ENCODE measurements at regions of chr17 and their contacts with region 1.

Region 1: DNA sequence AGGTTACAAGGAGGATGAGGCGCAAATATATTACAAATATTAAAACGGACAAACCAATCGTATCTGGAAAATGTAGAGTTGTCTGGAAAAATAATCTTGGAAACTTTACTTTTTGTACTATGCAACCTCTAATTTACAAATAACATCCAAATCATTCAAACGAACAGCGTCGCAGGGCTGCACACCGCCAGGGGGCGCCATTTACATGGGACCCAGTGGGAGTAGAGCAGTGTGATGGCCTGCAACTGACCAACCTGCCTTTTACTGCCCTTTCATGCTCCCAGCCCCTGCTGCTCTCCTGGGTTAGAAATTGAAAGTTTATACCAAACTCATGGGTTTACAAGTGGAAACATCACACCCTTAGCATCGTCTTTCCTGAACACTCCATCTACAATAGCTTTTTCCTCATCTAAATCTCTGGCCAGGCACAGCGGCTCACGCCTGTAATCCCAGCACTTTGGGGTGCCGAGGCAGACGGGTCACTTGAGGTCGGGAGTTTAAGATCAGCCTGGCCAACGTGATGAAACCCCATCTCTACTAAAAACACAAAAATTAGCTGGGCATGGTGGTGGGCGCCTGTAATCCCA is 10.0 kb downstream of the PITPNC1 start:
- DNase-seq: peak; percentile 55
- ATAC-seq: peak; percentile 28; the same call in 1 of the 2 replicates
- H3K4me3 ChIP-seq: no peak overlapping the region
- H3K27ac ChIP-seq: no peak overlapping the region
- H3K4me1 ChIP-seq: peaks cover 7% of the 10 kb centered on the region
- H3K27me3 ChIP-seq: no peaks in the 10 kb centered on the region
- CTCF ChIP-seq: peak; percentile 82
- POLR2A ChIP-seq: no peak
- RAD21 ChIP-seq: peak; percentile 80

Region 2: GRCh38 chr17:67459870-67460455 is 72.9 kb after region 1 on chr17:
- CTCF ChIA-PET with region 1: no interaction called
- POLR2A ChIA-PET with region 1: no interaction called
- dilution Hi-C with region 1: no loop called
- in situ Hi-C with region 1: loop called (anchors 5 kb)
- intact Hi-C with region 1: no loop called
- DNase-seq: no peak
- ATAC-seq: no peak
- H3K4me3 ChIP-seq: no peak overlapping the region
- H3K27ac ChIP-seq: no peak overlapping the region
- H3K4me1 ChIP-seq: no peaks in the 10 kb centered on the region
- H3K27me3 ChIP-seq: no peaks in the 10 kb centered on the region
- CTCF ChIP-seq: no peak
- POLR2A ChIP-seq: no peak
- RAD21 ChIP-seq: no peak

Region 3: GRCh38 chr17:67528751-67529436 is 141.8 kb after region 1 on chr17:
- CTCF ChIA-PET with region 1: no interaction called
- POLR2A ChIA-PET with region 1: no interaction called
- dilution Hi-C with region 1: no loop called
- in situ Hi-C with region 1: no loop called
- intact Hi-C with region 1: no loop called
- DNase-seq: peak; percentile 93
- ATAC-seq: peak; percentile 100
- H3K4me3 ChIP-seq: peak overlapping the region; percentile 42
- H3K27ac ChIP-seq: peak overlapping the region; percentile 29; the same call in 1 of the 2 replicates
- H3K4me1 ChIP-seq: peaks cover 2% of the 10 kb centered on the region; the same call in 1 of the 2 replicates
- H3K27me3 ChIP-seq: no peaks in the 10 kb centered on the region
- CTCF ChIP-seq: no peak
- POLR2A ChIP-seq: peak; percentile 40; the same call in 1 of the 2 replicates
- RAD21 ChIP-seq: peak; percentile 28

Region 4: GRCh38 chr17:67602956-67603355 is 215.9 kb after region 1 on chr17:
- CTCF ChIA-PET with region 1: no interaction called
- POLR2A ChIA-PET with region 1: no interaction called
- dilution Hi-C with region 1: no loop called
- in situ Hi-C with region 1: loop called (anchors 10 kb)
- intact Hi-C with region 1: no loop called
- DNase-seq: peak; percentile 49
- ATAC-seq: peak; percentile 66
- H3K4me3 ChIP-seq: no peak overlapping the region
- H3K27ac ChIP-seq: no peak overlapping the region
- H3K4me1 ChIP-seq: no peaks in the 10 kb centered on the region
- H3K27me3 ChIP-seq: no peaks in the 10 kb centered on the region
- CTCF ChIP-seq: peak; percentile 57
- POLR2A ChIP-seq: no peak
- RAD21 ChIP-seq: peak; percentile 68

Region 5: DNA sequence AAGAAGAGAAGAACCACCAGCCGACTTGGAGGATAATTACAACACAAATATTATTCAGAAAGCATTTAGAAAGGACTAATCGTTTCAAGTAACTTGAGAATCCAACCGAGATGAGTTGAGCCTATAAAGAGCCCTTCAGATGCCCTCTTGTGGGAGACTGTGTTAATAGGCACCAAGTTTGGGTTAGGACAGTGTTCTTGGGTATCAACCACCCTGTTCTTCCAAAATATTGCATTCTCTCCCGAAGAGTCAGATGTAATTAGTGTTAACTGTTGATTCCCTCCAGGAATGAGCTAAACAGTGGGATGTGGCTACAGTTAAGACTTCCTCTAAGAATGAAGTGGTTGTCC is 242.9 kb after region 1 on chr17:
- CTCF ChIA-PET with region 1: no interaction called
- POLR2A ChIA-PET with region 1: no interaction called
- dilution Hi-C with region 1: no loop called
- in situ Hi-C with region 1: no loop called
- intact Hi-C with region 1: loop called (anchors 1 kb)
- DNase-seq: peak; percentile 75
- ATAC-seq: peak; percentile 91
- H3K4me3 ChIP-seq: no peak overlapping the region
- H3K27ac ChIP-seq: no peak overlapping the region
- H3K4me1 ChIP-seq: no peaks in the 10 kb centered on the region
- H3K27me3 ChIP-seq: no peaks in the 10 kb centered on the region
- CTCF ChIP-seq: peak; percentile 62
- POLR2A ChIP-seq: no peak
- RAD21 ChIP-seq: peak; percentile 64